CD14-positive monocyte (primary cell): ENCODE measurements at regions of chr2 and their contacts with region 1.

Region 1: DNA sequence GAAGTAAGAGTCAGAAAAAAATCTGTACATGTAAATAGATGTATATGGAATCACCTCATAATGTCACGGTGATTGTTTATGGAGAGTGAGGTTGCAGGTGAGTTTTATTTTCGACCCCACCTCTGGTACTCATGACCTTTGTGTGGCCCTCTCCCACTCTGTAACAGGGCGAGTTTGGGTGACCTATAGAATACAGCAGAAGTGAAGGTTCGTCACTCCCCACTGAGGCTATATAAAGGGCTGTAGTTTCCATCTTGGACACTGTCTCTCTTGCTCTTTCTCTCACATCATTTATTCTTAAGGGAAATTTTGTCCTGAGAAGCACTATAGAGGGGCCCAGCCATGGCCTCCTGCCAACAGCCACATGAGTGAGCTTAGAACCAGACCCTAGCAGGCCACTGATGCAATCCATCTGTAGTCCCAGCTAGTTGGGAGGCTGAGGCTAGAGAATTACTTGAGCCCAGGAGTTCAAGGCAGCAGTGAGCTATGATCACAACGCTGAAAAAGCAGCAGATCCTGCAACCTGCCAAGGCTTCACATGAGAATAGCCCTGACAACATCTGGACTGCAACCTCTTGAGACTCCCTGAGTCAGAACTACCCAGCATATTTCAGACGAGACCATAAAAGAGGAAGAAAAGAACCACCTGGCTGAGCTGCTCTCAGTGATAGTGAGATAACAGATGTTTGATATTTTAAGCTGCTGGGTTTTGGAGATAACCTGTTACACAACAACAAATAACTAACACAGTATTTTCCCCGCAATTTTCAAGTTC is 74.3 kb upstream of the SLC1A4 start:
- DNase-seq: peak in 2 of 3 donors; percentile 20 to 35
- H3K4me3 ChIP-seq: no peak overlapping the region
- H3K4me3 Mint-ChIP-seq: no peak overlapping the region
- H3K27ac ChIP-seq: no peak overlapping the region
- H3K27ac Mint-ChIP-seq: peak overlapping the region in 1 of 7 donors; percentile 75
- H3K4me1 ChIP-seq: peaks cover 16 to 24% of the 10 kb centered on the region in 2 donors
- H3K4me1 Mint-ChIP-seq: peaks cover 37% of the 10 kb centered on the region
- H3K27me3 ChIP-seq: no peaks in the 10 kb centered on the region
- H3K27me3 Mint-ChIP-seq: no peaks in the 10 kb centered on the region
- CTCF ChIP-seq: no peak

Region 2: DNA sequence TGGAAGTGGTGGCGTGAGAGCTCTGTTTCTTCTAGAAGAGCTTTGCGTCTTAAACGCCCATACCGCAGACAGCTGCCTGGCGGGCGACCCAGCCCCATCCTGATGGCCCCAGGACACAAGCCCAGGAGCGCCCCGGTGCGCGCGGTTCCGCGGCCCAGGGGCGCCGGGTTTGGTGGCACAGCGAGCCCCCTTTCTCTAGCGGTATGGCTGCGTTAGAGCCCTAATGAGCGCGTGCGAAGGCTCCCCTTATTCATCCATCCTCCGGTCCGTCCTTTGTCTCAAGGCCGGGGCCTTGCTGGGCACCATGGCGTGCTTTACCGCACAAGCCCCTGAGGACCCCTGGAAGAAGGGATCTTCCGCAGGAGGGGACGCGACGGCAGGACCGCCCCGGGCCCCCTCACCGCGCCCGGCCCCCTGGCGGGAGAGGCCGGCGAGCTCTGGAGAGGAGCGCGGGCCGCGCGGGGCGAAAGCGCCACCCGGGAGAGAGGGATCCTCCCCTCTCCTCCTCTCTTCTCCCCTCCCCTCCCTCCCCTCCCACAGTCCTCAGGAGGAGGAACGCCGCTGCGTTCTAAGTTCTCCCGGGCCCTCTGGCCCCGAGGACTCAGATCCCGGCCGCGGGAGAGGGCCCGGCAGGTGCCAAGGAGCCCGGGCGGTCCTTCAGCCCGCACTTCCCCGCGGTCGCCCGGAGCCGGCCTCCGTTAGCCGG is 73.7 kb after region 1 on chr2:
- intact Hi-C with region 1: loop called (anchors 2 to 10 kb)
- DNase-seq: no peak
- H3K4me3 ChIP-seq: peak overlapping the region; percentile 64 to 91 (median 73)
- H3K4me3 Mint-ChIP-seq: peak overlapping the region; percentile 85 to 92
- H3K27ac ChIP-seq: peak overlapping the region; percentile 75 to 91
- H3K27ac Mint-ChIP-seq: peak overlapping the region; percentile 44 to 83 (median 73)
- H3K4me1 ChIP-seq: peaks cover 35 to 53% of the 10 kb centered on the region in 2 donors
- H3K4me1 Mint-ChIP-seq: peaks cover 59% of the 10 kb centered on the region
- H3K27me3 ChIP-seq: no peaks in the 10 kb centered on the region
- H3K27me3 Mint-ChIP-seq: peaks cover 0 to 1% (median 0%) of the 10 kb centered on the region in 3 donors
- CTCF ChIP-seq: peak; percentile 63

Region 3: DNA sequence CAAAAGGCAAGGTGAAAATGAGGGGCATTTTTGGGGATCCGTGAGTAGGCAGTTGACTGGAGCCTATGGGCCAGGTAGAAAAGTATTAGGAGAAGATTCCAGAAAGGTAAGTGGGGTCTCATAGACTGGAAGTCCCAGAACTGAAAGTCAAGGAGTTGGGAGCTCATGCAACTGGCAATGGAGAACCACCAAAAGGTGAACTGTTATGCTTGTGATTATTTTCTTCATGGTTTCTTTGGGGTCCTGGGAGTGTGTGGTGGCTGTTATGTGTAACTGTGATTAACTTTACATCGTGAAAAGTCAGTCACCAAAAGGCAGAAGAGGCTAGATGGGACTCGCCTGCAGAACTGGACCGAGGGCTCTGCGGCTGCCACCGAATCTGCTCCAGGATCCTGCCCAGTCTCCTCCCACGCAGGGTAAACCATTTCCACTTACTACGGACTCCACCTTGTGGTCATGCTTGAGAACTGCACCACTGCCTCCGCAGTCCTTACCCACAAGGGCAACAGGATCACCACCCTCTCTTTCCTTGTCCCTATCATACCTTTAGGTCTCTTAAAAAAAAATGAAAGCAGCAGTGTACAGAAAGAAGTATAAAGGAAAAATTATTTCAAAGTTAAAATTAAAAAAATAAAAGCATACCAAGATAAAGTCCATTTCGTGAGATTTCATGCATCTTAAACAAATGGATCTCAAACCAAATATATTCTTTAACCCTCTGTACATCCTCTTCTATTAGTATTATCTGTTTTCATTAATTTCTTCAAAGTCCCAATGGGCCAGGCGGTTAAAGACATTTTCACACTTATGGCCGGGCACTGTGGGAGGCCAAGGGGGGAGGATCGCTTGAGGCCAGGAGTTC is 125.7 kb after region 1 on chr2:
- intact Hi-C with region 1: loop called (anchors 2 kb)
- DNase-seq: peak; percentile 76 to 81 (median 80)
- H3K4me3 ChIP-seq: no peak overlapping the region
- H3K4me3 Mint-ChIP-seq: peak overlapping the region; percentile 38 to 80
- H3K27ac ChIP-seq: no peak overlapping the region
- H3K27ac Mint-ChIP-seq: no peak overlapping the region
- H3K4me1 ChIP-seq: peaks cover 4 to 7% of the 10 kb centered on the region in 2 donors
- H3K4me1 Mint-ChIP-seq: peaks cover 8% of the 10 kb centered on the region
- H3K27me3 ChIP-seq: no peaks in the 10 kb centered on the region
- H3K27me3 Mint-ChIP-seq: peaks cover 0 to 2% (median 0%) of the 10 kb centered on the region in 3 donors
- CTCF ChIP-seq: peak; percentile 95

Region 4: DNA sequence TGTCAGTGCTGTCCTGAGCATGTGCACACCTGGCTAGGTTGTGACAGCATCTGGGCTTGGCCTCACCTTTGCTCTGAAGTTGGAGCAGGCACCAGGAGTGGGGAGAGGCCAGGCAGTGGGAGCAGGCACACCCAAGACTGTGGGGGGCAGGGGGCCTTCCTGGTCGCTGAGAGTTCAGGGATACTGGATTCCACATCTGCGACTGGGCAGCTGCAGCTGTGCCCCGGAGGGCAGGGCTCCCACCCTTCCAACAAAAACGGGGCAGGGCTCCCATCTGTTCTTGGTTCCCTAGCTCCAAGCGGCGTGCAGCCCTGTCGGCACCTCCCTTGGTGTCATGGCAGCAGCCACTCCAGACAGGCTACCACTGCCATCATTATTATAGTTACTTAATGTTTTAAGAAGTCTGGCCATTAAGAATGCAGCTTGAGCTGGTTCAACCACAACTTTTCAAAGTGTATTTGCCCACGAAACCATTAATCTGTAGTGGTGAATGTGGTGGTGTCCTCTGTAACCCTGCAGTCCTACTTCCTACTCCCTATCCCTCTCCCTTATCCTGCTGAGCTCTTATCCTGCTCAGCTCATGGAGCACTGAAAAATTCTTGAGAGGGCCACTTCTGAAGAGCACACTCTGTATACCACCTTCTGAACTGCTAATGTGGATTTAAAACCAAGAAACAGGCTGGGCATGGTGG is 263.0 kb after region 1 on chr2:
- intact Hi-C with region 1: loop called in 1 of 2 experiments (anchors 10 kb)
- DNase-seq: no peak
- H3K4me3 ChIP-seq: no peak overlapping the region
- H3K4me3 Mint-ChIP-seq: no peak overlapping the region
- H3K27ac ChIP-seq: no peak overlapping the region
- H3K27ac Mint-ChIP-seq: no peak overlapping the region
- H3K4me1 ChIP-seq: no peaks in the 10 kb centered on the region
- H3K4me1 Mint-ChIP-seq: no peaks in the 10 kb centered on the region
- H3K27me3 ChIP-seq: no peaks in the 10 kb centered on the region
- H3K27me3 Mint-ChIP-seq: peaks cover 0 to 3% (median 2%) of the 10 kb centered on the region in 3 donors
- CTCF ChIP-seq: no peak

Region 5: GRCh38 chr2:65576861-65577601 is 662.1 kb after region 1 on chr2:
- intact Hi-C with region 1: loop called in 1 of 2 experiments (anchors 10 kb)
- DNase-seq: no peak
- H3K4me3 ChIP-seq: no peak overlapping the region
- H3K4me3 Mint-ChIP-seq: no peak overlapping the region
- H3K27ac ChIP-seq: no peak overlapping the region
- H3K27ac Mint-ChIP-seq: peak overlapping the region in 2 of 7 donors; percentile 12 to 78
- H3K4me1 ChIP-seq: peaks cover 7 to 8% of the 10 kb centered on the region in 2 donors
- H3K4me1 Mint-ChIP-seq: peaks cover 13% of the 10 kb centered on the region
- H3K27me3 ChIP-seq: no peaks in the 10 kb centered on the region
- H3K27me3 Mint-ChIP-seq: peaks cover 0 to 10% (median 3%) of the 10 kb centered on the region in 3 donors
- CTCF ChIP-seq: no peak